Endothelial cell of umbilical vein (primary cell): ENCODE measurements at regions of chr1 and their contacts with region 1.

Region 1: GRCh38 chr1:41432481-41433280 is 51.8 kb downstream of the EDN2 start:
- DNase-seq: peak; percentile 84
- H3K4me3 ChIP-seq: no peak overlapping the region
- H3K27ac ChIP-seq: no peak overlapping the region
- H3K4me1 ChIP-seq: peaks cover 27% of the 10 kb centered on the region
- H3K27me3 ChIP-seq: peaks cover 2 to 4% of the 10 kb centered on the region in 2 experiments
- CTCF ChIP-seq: peak; percentile 93 to 96
- POLR2A ChIP-seq: no peak

Region 2: DNA sequence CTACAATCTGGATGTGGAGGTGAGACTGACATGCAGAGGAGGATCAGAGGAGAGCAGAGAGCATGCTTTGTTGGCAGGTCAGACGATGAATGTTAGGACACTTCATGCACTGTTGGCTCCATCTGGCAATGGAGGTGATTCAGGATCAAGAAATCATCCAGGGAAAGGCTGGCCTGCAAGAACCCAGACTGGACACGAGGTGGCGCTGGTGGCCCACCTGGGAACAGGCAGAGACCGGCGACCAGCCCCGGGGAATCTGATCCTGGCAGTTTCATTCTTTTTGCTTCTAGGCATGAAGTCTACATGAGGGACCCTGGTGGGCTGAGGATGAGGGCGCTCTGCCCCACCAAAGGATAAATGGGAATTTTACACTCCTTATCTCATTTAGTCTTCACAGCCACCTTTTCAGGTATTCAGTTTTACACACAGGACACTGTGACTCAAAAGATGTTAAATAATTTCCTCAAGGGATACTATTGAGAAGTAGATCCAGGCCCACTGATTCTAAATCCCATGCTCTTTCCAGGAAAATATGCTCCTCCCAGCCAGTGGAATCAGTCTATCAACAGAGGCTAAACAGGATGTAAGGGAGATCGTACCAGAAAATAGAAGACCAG is 164.4 kb before region 1 on chr1:
- CTCF ChIA-PET with region 1: interaction called, 12 read pairs
- POLR2A ChIA-PET with region 1: no interaction called
- dilution Hi-C with region 1: no loop called
- intact Hi-C with region 1: loop called (anchors 1 kb)
- DNase-seq: peak; percentile 68
- H3K4me3 ChIP-seq: no peak overlapping the region
- H3K27ac ChIP-seq: no peak overlapping the region
- H3K4me1 ChIP-seq: no peaks in the 10 kb centered on the region
- H3K27me3 ChIP-seq: peaks cover 0 to 9% of the 10 kb centered on the region in 2 experiments
- CTCF ChIP-seq: peak; percentile 95 to 97
- POLR2A ChIP-seq: no peak

Region 3: DNA sequence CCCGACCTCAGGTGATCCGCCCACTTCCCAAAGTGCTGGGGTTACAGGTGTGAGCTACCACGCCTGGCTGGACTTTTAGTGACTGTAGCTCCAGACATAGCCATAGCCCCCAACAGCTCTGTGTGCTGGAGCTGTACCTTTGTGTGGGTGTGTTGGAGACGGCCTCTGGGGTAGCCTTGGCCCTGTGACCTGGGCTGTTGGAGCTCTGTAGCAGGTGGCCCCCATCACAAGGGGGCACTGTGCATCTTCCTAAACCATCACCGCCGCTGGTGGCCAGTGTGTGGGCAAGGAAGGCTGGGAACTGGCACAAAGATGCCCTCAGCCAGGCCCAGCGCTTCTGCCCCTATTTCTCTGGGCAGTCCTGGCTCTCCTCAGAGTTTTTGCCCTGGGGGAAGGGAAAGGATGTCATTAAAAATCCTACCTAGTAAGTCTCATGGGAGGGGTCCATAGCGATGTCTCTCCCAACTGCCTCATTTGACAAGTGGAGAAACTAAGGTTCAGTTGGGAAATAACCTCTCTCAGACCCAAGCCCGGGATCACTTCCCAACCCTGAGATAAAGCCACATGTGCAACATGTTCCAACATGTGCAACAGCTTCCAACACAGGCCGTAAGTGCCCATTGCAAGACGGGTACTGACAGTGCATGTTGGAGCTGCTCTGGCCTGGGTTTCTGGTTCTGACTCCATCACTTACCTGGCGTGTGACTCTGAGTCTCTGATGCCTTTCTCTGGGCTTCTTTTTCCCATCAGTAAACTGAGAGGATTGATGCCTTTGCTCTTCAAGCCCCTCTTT is 109.7 kb before region 1 on chr1:
- CTCF ChIA-PET with region 1: interaction called, 28 read pairs
- POLR2A ChIA-PET with region 1: no interaction called
- dilution Hi-C with region 1: no loop called
- intact Hi-C with region 1: loop called (anchors 1 kb)
- DNase-seq: peak; percentile 24
- H3K4me3 ChIP-seq: no peak overlapping the region
- H3K27ac ChIP-seq: no peak overlapping the region
- H3K4me1 ChIP-seq: no peaks in the 10 kb centered on the region
- H3K27me3 ChIP-seq: no peaks in the 10 kb centered on the region
- CTCF ChIP-seq: peak; percentile 53 to 62
- POLR2A ChIP-seq: no peak

Region 4: GRCh38 chr1:41416552-41417334 is 15.9 kb before region 1 on chr1:
- CTCF ChIA-PET with region 1: interaction called, 37 read pairs
- POLR2A ChIA-PET with region 1: no interaction called
- dilution Hi-C with region 1: no loop called
- intact Hi-C with region 1: loop called (anchors 1 kb)
- DNase-seq: peak; percentile 71
- H3K4me3 ChIP-seq: no peak overlapping the region
- H3K27ac ChIP-seq: no peak overlapping the region
- H3K4me1 ChIP-seq: peaks cover 9% of the 10 kb centered on the region
- H3K27me3 ChIP-seq: no peaks in the 10 kb centered on the region
- CTCF ChIP-seq: peak; percentile 82 to 96
- POLR2A ChIP-seq: no peak